ENCODE measurements at regions of chr22 and their contacts with region 1.

Region 1: GRCh38 chr22:27726697-27727449 is 74.7 kb downstream of the MN1 start:
- DNase-seq: peak; percentile 84

Region 2: GRCh38 chr22:27617214-27617881 is 109.5 kb before region 1 on chr22:
- intact Hi-C with region 1: no loop called
- DNase-seq: no peak

Region 3: DNA sequence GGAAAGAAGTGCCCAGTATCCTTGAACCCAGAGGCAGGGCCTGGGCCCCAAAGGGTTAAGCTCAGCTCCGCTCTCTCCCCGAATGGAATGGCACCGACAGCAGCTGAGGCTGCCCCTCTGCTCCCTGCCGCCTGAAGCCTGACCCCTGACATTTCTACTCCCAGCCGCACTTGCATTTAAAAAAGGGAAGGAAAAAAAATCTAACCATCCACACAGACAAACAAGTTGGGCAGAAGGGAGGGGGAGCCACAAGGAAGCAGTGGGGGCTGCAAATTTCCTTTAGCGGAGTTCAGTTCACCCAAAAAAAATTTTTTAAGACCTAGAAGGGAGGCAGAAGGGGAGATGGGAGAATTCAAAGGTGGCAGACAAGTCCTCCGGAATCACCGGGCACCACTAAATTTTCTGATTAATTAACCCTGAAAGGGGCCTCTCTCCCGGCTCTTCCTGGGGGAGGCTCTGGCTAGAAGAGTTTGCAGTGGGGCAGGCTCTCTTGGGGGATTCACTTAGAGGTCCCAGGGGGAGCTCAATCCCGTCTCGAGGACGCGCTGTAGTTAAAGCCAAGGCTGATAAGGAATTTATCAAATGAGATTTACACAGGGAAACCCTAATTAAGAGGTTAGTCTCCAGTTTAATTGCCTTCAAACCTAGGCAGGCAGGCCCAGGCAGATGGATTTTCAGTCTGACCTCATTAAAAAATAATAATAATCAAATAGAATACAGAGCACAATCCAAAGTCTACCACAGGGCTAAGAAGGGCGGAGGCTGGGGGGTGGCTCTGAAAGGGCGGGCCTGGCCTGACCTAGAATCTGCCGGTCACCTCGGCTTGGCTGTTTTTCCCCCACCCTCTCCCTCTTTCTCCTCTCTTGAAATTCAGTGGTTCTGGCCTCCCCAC is 49.1 kb after region 1 on chr22:
- intact Hi-C with region 1: loop called (anchors 5 kb)
- DNase-seq: no peak